PC-3 (cell line): ENCODE measurements at regions of chr14 and their contacts with region 1.

Region 1: DNA sequence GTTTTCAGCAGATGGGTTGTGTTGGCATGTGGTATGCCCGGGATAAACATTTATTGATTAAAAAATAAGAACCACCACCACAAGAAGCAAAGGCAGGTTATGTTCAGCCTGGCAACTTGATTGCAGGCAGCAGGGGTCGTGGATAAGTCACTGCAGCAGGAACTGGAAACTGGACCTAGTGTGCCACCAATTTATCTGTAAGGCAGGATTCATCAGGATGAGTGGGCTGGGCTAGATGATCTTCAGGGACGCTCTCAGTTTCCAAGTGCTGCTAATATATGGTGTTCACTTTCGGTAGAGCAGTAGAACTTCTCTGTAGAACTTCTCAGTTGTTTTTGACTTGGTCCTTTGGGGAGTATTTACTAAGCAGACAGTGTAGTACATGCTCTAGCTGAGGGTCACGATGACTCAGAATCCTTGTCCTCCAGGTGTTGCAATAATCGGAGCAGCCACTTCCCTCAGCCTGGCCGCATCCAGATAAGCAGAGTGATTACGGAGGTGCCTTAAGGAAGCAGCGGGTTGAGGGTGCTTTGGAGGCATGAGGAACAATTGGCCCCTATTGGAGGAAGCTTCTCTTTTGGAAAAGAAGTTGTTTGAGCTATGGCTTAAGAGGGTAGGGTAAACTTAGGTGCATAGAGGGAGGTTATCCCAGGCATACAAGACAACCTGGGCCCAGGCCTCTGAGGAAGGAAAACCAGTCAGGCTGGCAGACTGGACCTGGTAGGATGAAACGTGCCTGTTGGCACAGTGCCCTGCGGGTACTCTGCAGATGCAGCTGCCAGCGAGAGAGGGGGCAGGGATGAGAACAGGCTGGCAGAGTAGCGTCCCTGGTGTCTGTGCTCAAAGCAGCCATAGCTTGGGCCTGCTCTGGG is 104.0 kb downstream of the GPR135 start:
- DNase-seq: peak; percentile 100
- ATAC-seq: peak; percentile 72
- H3K4me3 ChIP-seq: peak overlapping the region; percentile 4
- H3K27ac ChIP-seq: peak overlapping the region; percentile 72
- H3K4me1 ChIP-seq: peaks cover 82% of the 10 kb centered on the region
- H3K27me3 ChIP-seq: no peaks in the 10 kb centered on the region
- CTCF ChIP-seq: peak; percentile 36

Region 2: DNA sequence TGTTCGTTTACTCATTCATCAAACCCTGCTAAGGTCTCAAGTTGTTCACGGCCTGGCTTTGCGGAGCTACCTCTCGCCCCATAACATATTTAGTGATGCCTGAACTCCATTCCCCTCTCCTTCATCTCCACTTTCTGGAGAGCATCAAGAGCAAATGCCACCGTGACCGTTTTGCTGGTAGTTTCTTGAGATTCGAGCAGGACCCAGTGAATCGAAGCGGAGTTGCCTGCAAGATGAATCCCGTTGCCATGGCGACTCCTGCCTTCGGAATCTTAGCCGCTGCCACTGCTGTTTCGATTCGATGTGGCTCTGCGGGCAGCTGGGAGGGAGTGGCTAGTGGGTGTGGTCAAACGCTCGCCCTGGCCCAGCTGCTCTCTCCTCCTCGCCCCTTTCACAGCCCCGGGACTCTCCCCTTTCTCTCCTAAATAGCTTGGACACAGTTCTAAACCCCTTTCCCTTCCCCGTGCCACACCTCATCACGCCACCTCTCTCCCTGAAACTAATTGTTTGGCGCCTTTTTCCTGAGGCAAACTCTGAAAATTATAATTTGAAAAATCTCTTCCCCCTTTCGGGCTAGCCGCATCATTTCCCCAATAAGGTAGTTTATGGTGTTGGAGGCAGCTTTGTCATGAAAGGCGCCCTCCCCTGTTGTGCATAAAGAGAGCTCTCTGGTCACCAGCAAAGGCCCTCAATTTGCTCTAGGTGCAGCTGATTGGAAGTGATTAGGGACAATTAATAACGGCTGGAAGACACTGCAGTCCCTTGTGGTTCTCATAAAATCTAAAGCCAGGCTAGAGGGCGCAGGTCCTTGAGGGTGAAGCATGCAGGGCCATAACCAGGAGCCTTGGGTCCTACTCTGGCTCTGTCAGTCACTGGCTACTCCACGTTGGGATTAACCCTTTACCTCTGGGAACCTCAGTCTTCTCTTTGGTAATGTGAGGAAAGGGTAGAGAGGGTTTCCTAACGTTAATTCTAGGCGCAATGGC is 171.1 kb before region 1 on chr14:
- CTCF ChIA-PET with region 1: no interaction called
- POLR2A ChIA-PET with region 1: no interaction called
- intact Hi-C with region 1: loop called (anchors 1 kb)
- DNase-seq: peak; percentile 99
- ATAC-seq: peak; percentile 46
- H3K4me3 ChIP-seq: peak overlapping the region; percentile 79
- H3K27ac ChIP-seq: no peak overlapping the region
- H3K4me1 ChIP-seq: peaks cover 27% of the 10 kb centered on the region
- H3K27me3 ChIP-seq: peaks cover 18% of the 10 kb centered on the region
- CTCF ChIP-seq: peak; percentile 89

Region 3: GRCh38 chr14:59281613-59282377 is 79.4 kb before region 1 on chr14:
- CTCF ChIA-PET with region 1: no interaction called
- POLR2A ChIA-PET with region 1: no interaction called
- intact Hi-C with region 1: loop called (anchors 2 kb)
- DNase-seq: peak; percentile 95
- ATAC-seq: 0 out of 2 replicates have a peak, but pooled peaks have one; percentile 8
- H3K4me3 ChIP-seq: no peak overlapping the region
- H3K27ac ChIP-seq: peak overlapping the region; percentile 21
- H3K4me1 ChIP-seq: peaks cover 58% of the 10 kb centered on the region
- H3K27me3 ChIP-seq: no peaks in the 10 kb centered on the region
- CTCF ChIP-seq: no peak

Region 4: DNA sequence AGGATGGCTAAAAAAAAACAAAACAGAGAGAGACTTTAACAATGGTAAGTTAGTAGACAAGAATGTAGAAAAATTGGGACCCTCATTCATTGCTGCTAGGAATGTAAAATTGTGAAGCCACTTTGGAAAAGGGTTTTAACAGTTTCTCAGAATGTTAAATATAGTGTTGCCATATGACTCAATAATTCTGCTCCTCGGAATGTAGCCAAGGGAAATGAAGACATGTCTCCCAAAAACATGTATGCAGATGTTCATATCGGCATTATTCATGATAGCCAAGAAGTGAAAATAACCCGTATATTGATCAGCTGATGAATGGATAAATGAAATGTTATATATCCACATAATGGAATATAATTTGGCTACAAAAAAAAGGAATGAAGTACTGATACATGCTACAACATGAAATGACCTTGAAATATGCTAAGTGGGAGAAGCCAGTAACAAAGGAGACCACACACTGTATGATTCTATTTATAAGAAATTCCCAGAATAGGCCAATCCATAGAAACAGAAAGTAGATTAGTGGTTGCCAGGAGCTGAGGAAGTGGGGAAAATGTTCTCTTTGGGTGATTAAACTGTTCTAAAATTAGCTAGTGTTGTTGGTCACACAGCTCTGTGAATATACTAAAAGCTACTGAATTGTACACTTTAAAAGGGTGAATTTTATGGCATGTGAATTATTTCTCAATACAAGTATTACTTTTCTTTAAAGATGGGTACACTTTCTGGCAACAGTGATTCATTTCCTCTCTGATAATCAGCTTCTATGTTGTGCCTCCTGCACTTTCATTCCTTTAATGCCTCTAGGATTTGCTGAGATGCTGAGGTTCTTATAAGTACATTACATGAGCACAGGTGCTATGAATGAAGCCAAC is 40.2 kb before region 1 on chr14:
- CTCF ChIA-PET with region 1: no interaction called
- POLR2A ChIA-PET with region 1: interaction called, 4 read pairs
- intact Hi-C with region 1: loop called (anchors 2 kb)
- DNase-seq: no peak
- ATAC-seq: peak; percentile 96
- H3K4me3 ChIP-seq: no peak overlapping the region
- H3K27ac ChIP-seq: peak overlapping the region; percentile 1
- H3K4me1 ChIP-seq: peaks cover 18% of the 10 kb centered on the region
- H3K27me3 ChIP-seq: no peaks in the 10 kb centered on the region
- CTCF ChIP-seq: no peak

Region 5: GRCh38 chr14:59422069-59422881 is 61.1 kb after region 1 on chr14:
- CTCF ChIA-PET with region 1: no interaction called
- POLR2A ChIA-PET with region 1: no interaction called
- intact Hi-C with region 1: no loop called
- DNase-seq: peak; percentile 62
- ATAC-seq: peak; percentile 39; the same call in 1 of the 2 replicates
- H3K4me3 ChIP-seq: no peak overlapping the region
- H3K27ac ChIP-seq: no peak overlapping the region
- H3K4me1 ChIP-seq: no peaks in the 10 kb centered on the region
- H3K27me3 ChIP-seq: no peaks in the 10 kb centered on the region
- CTCF ChIP-seq: peak; percentile 97

Region 6: GRCh38 chr14:59483900-59484638 is 122.9 kb after region 1 on chr14 and contains the starts of genes JKAMP and L3HYPDH:
- CTCF ChIA-PET with region 1: no interaction called
- POLR2A ChIA-PET with region 1: interaction called, 3 read pairs
- intact Hi-C with region 1: loop called (anchors 2 kb)
- DNase-seq: peak; percentile 100
- ATAC-seq: peak; percentile 75
- H3K4me3 ChIP-seq: peak within 1 kb of the TSS; percentile 79
- H3K27ac ChIP-seq: peak within 1 kb of the TSS; percentile 83
- H3K4me1 ChIP-seq: peaks cover 42% of the 10 kb centered on the region
- H3K27me3 ChIP-seq: no peaks in the 10 kb centered on the region
- CTCF ChIP-seq: peak; percentile 92
- total RNA-seq, gene JKAMP: 130 and 147 TPM in 2 replicates
- total RNA-seq, gene L3HYPDH: 108 and 117 TPM in 2 replicates